Activated T-helper 2 cell treated with anti-CD3 and anti-CD28 coated beads, Interferon-gamma antibody, Interleukin-2, Interleukin-4, amounts not matched to agents 10 μg/mL and 5 μg/mL and 100 μg/mL, durations not matched to agents 14 hours and 24 hours and 36 hours (primary cell): ENCODE measurements at regions of chr1 and their contacts with region 1.

Region 1: DNA sequence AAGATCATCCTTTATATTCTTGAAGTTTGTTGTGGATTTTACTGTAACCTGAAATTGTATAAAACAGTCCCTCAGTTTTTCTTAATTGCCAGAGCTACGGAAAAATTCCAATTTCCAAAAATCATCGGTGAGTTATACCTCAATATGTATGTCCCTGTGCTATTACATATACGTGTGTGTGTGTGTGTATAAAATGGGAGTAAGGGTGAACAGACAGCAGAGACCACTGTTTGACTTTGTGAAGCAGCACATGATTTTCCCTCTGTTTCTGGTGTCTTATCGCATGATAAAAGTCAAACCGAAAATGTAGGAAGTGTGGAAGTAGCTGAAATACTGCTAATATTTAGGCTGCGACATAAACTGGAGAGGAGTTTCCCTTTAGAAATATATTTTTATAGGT is 1.2 kb downstream of the OR2T1 start:
- DNase-seq: no peak
- H3K4me3 Mint-ChIP-seq: no peak overlapping the region
- H3K27ac Mint-ChIP-seq: no peak overlapping the region
- H3K4me1 Mint-ChIP-seq: peaks cover 2% of the 10 kb centered on the region
- H3K27me3 Mint-ChIP-seq: no peaks in the 10 kb centered on the region

Region 2: GRCh38 chr1:248388426-248388825 is 15.6 kb before region 1 on chr1:
- intact Hi-C with region 1: no loop called
- DNase-seq: no peak
- H3K4me3 Mint-ChIP-seq: no peak overlapping the region
- H3K27ac Mint-ChIP-seq: no peak overlapping the region
- H3K4me1 Mint-ChIP-seq: no peaks in the 10 kb centered on the region
- H3K27me3 Mint-ChIP-seq: no peaks in the 10 kb centered on the region

Region 3: GRCh38 chr1:248613742-248614141 is 209.7 kb after region 1 on chr1:
- intact Hi-C with region 1: loop called (anchors 1 kb)
- DNase-seq: no peak
- H3K4me3 Mint-ChIP-seq: no peak overlapping the region
- H3K27ac Mint-ChIP-seq: peak overlapping the region; percentile 82
- H3K4me1 Mint-ChIP-seq: peaks cover 36% of the 10 kb centered on the region
- H3K27me3 Mint-ChIP-seq: no peaks in the 10 kb centered on the region

Region 4: GRCh38 chr1:248625990-248626389 is 222.0 kb after region 1 on chr1:
- intact Hi-C with region 1: no loop called
- DNase-seq: no peak
- H3K4me3 Mint-ChIP-seq: no peak overlapping the region
- H3K27ac Mint-ChIP-seq: no peak overlapping the region
- H3K4me1 Mint-ChIP-seq: no peaks in the 10 kb centered on the region
- H3K27me3 Mint-ChIP-seq: no peaks in the 10 kb centered on the region

Region 5: GRCh38 chr1:248686815-248687214 is 282.8 kb after region 1 on chr1:
- intact Hi-C with region 1: loop called (anchors 1 kb)
- DNase-seq: no peak
- H3K4me3 Mint-ChIP-seq: no peak overlapping the region
- H3K27ac Mint-ChIP-seq: no peak overlapping the region
- H3K4me1 Mint-ChIP-seq: peaks cover 4% of the 10 kb centered on the region
- H3K27me3 Mint-ChIP-seq: peaks cover 3% of the 10 kb centered on the region

Region 6: DNA sequence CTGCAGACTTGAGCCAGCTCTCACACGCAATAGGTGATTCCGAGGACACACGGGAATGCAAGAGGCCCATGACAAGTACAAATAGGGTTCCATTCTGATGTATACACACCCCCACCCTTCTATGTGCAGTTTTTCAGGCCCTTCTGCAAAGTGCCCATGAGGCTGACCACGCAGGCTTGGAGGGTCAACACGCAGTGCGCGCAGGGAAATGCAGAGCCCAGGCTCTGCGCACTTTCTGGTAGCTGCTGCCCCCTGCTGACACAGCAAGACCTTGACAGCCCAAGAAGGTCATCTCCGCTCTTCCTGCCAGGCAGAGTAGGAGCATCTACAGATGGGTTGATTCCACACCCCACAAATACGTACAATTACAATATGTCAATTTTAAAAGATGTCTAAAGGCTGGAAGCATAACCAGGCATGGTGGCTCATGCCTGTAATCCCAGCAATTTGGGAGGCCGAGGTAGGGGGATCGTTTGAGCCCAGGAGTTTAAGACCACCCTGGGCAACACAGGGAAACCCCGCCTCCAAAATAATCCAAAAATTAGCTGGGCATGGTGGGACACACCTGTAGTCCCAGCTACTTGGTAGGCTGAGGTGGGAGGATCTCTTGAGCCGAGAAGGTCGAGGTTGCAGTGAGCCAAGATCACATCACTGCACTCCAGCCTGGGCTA is 403.2 kb after region 1 on chr1:
- intact Hi-C with region 1: loop called (anchors 1 kb)
- DNase-seq: peak; percentile 24
- H3K4me3 Mint-ChIP-seq: no peak overlapping the region
- H3K27ac Mint-ChIP-seq: no peak overlapping the region
- H3K4me1 Mint-ChIP-seq: no peaks in the 10 kb centered on the region
- H3K27me3 Mint-ChIP-seq: no peaks in the 10 kb centered on the region